ENCODE measurements at regions of chr9 and their contacts with region 1.

Region 1: DNA sequence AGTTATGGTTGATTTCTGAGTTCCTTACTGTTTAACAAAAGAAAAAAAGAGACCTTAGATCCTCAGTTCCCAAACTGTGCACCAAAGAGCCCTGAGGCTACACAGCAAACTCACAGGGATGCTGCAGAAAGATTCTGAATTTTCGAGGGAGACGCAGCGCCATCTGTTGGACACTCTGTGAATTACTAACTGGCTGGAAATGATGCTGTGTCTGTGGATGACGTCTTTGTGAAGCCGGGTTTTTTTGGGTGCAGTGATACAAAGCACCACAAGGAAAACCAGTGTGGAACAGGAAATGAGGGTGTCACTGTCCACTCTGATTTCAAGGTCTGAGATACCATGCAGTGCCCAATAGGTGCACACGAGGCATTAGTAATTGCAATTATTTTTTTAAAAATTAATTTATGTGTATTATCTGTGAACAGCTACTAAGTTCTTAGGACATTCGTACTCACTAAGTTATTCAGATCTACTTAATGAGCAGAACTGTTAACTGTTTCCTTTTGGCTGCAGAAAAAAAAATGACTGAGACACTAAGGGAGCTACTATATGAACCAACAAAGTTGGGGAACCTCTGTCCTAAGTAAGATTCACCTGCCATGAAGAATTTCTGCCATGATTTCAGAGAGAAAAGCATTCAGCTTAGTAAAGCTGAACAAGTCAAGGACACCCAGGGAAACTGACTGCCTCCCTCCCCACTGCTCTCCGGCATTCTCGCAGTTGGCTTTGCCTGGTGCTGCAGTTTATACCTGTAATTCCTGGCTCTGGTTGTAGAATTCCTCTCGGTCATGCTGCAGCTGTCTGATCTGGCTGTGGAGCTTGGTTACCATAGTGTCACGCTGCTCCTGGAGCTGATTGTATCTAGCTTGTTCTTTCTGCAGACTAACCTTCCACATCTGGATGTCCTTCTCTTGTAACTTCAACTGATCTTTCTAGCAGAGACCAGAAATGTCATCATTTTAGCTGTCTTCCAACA is 23.4 kb downstream of the SPACA9 start:
- DNase-seq: peak; percentile 89
- ATAC-seq: peak; percentile 96
- H3K4me3 ChIP-seq: no peak overlapping the region
- H3K4me3 Mint-ChIP-seq: no peak overlapping the region
- H3K27ac ChIP-seq: peak overlapping the region in 1 of 2 donors; percentile 35
- H3K27ac Mint-ChIP-seq: no peak overlapping the region
- H3K4me1 ChIP-seq: peaks cover 0 to 5% of the 10 kb centered on the region in 2 donors
- H3K4me1 Mint-ChIP-seq: peaks cover 9% of the 10 kb centered on the region
- H3K27me3 ChIP-seq: no peaks in the 10 kb centered on the region
- H3K27me3 Mint-ChIP-seq: no peaks in the 10 kb centered on the region
- CTCF ChIP-seq: peak; percentile 92

Region 2: GRCh38 chr9:132669698-132670456 is 232.3 kb before region 1 on chr9 and contains the start of gene DDX31:
- CTCF ChIA-PET with region 1: interaction called, 9 read pairs
- POLR2A ChIA-PET with region 1: no interaction called
- intact Hi-C with region 1: loop called (anchors 10 kb)
- DNase-seq: peak; percentile 94
- ATAC-seq: peak; percentile 82
- H3K4me3 ChIP-seq: peak within 1 kb of the TSS; percentile 73 to 100 (median 96)
- H3K4me3 Mint-ChIP-seq: peak within 1 kb of the TSS; percentile 93
- H3K27ac ChIP-seq: peak within 1 kb of the TSS; percentile 86 to 95
- H3K27ac Mint-ChIP-seq: peak within 1 kb of the TSS; percentile 94
- H3K4me1 ChIP-seq: peaks cover 20 to 28% of the 10 kb centered on the region in 2 donors
- H3K4me1 Mint-ChIP-seq: peaks cover 52% of the 10 kb centered on the region
- H3K27me3 ChIP-seq: no peaks in the 10 kb centered on the region
- H3K27me3 Mint-ChIP-seq: no peaks in the 10 kb centered on the region
- CTCF ChIP-seq: no peak
- total RNA-seq, gene DDX31: 22.2 and 22.7 TPM in 2 replicates

Region 3: GRCh38 chr9:132744881-132745755 is 157.0 kb before region 1 on chr9:
- CTCF ChIA-PET with region 1: no interaction called
- POLR2A ChIA-PET with region 1: no interaction called
- intact Hi-C with region 1: no loop called
- DNase-seq: no peak
- ATAC-seq: no peak
- H3K4me3 ChIP-seq: no peak overlapping the region
- H3K4me3 Mint-ChIP-seq: no peak overlapping the region
- H3K27ac ChIP-seq: no peak overlapping the region
- H3K27ac Mint-ChIP-seq: no peak overlapping the region
- H3K4me1 ChIP-seq: no peaks in the 10 kb centered on the region
- H3K4me1 Mint-ChIP-seq: peaks cover 4% of the 10 kb centered on the region
- H3K27me3 ChIP-seq: peaks cover 0 to 34% (median 14%) of the 10 kb centered on the region in 4 experiments
- H3K27me3 Mint-ChIP-seq: peaks cover 40% of the 10 kb centered on the region
- CTCF ChIP-seq: no peak

Region 4: DNA sequence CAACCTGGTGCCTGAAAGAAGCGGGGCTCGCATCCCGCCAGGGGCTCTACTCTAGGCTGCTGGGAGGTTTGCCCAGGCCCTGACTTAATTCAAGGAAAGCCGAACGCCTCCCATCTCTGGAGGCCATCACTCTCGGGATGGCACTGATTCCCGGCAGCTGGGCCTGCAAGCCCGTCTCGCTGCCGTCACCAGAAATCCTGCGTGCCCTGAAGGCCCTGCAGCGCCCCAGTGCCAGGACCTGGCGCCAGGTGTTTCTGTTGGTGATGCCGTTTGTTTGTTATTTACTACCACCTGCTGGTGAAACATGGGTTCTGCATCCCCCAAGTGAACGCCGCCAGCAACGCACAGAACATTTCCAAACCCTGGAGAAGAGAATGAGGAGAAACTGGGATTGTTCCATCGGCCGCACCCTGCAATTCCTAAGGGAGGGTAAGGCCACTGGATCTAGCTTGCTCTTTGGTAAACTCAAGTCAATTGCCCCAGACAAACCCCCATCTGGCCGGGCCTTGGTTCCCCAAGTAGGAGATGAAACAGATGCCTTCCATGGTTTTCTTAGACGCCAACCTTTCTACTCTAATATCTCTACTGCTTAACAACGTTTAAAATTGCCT is 102.0 kb before region 1 on chr9:
- CTCF ChIA-PET with region 1: interaction called, 6 read pairs
- POLR2A ChIA-PET with region 1: no interaction called
- intact Hi-C with region 1: loop called (anchors 5 kb)
- DNase-seq: peak; percentile 80
- ATAC-seq: peak; percentile 89
- H3K4me3 ChIP-seq: no peak overlapping the region
- H3K4me3 Mint-ChIP-seq: no peak overlapping the region
- H3K27ac ChIP-seq: no peak overlapping the region
- H3K27ac Mint-ChIP-seq: no peak overlapping the region
- H3K4me1 ChIP-seq: peaks cover 13 to 18% of the 10 kb centered on the region in 2 donors
- H3K4me1 Mint-ChIP-seq: peaks cover 16% of the 10 kb centered on the region
- H3K27me3 ChIP-seq: peaks cover 0 to 20% (median 0%) of the 10 kb centered on the region in 4 experiments
- H3K27me3 Mint-ChIP-seq: peaks cover 29% of the 10 kb centered on the region
- CTCF ChIP-seq: peak; percentile 88

Region 5: GRCh38 chr9:132877824-132878694 is 24.1 kb before region 1 on chr9 and contains the start of gene AK8:
- CTCF ChIA-PET with region 1: interaction called, 30 read pairs
- POLR2A ChIA-PET with region 1: no interaction called
- intact Hi-C with region 1: loop called (anchors 1 kb)
- DNase-seq: peak; percentile 90
- ATAC-seq: peak; percentile 85
- H3K4me3 ChIP-seq: peak within 1 kb of the TSS; percentile 64 to 99 (median 94)
- H3K4me3 Mint-ChIP-seq: peak within 1 kb of the TSS; percentile 89
- H3K27ac ChIP-seq: peak within 1 kb of the TSS; percentile 51 to 81
- H3K27ac Mint-ChIP-seq: peak within 1 kb of the TSS; percentile 91
- H3K4me1 ChIP-seq: peaks cover 16 to 29% of the 10 kb centered on the region in 2 donors
- H3K4me1 Mint-ChIP-seq: peaks cover 24% of the 10 kb centered on the region
- H3K27me3 ChIP-seq: no peaks in the 10 kb centered on the region
- H3K27me3 Mint-ChIP-seq: no peaks in the 10 kb centered on the region
- CTCF ChIP-seq: no peak
- total RNA-seq, gene AK8: 1.9 and 4.4 TPM in 2 replicates

Region 6: GRCh38 chr9:132919614-132920268 is 17.6 kb after region 1 on chr9:
- CTCF ChIA-PET with region 1: interaction called, 18 read pairs
- POLR2A ChIA-PET with region 1: no interaction called
- intact Hi-C with region 1: no loop called
- DNase-seq: no peak
- ATAC-seq: no peak
- H3K4me3 ChIP-seq: no peak overlapping the region
- H3K4me3 Mint-ChIP-seq: no peak overlapping the region
- H3K27ac ChIP-seq: no peak overlapping the region
- H3K27ac Mint-ChIP-seq: no peak overlapping the region
- H3K4me1 ChIP-seq: no peaks in the 10 kb centered on the region
- H3K4me1 Mint-ChIP-seq: no peaks in the 10 kb centered on the region
- H3K27me3 ChIP-seq: no peaks in the 10 kb centered on the region
- H3K27me3 Mint-ChIP-seq: no peaks in the 10 kb centered on the region
- CTCF ChIP-seq: no peak